Calu3 (cell line): ENCODE measurements at regions of chr16 and their contacts with region 1.

Region 1: DNA sequence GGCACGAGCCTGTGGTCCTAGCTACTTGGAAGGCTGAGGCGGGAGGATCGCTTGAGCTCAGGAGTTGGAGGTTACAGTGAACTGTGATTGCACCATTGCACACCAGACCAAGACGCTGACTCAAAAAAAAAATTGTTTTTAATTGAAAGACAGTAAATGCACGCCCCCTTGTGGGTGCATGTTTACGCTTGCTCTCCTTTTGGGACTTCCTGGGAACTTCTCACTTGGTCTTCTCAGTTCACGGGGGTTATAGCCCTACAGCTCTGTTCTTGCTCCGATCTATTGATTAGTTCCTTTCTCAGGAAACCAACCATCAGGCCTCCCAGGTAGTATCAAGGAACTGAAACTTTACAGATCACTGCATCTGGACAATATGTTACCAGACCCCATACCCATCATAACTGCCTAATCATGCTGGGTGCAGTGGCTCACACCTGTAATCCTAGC is 14.2 kb upstream of the RIPOR1 start:
- DNase-seq: peak; percentile 85
- H3K4me3 Mint-ChIP-seq: no peak overlapping the region
- H3K27ac Mint-ChIP-seq: no peak overlapping the region
- H3K4me1 Mint-ChIP-seq: no peaks in the 10 kb centered on the region
- H3K27me3 Mint-ChIP-seq: peaks cover 7% of the 10 kb centered on the region
- CTCF ChIP-seq: peak; percentile 82

Region 2: DNA sequence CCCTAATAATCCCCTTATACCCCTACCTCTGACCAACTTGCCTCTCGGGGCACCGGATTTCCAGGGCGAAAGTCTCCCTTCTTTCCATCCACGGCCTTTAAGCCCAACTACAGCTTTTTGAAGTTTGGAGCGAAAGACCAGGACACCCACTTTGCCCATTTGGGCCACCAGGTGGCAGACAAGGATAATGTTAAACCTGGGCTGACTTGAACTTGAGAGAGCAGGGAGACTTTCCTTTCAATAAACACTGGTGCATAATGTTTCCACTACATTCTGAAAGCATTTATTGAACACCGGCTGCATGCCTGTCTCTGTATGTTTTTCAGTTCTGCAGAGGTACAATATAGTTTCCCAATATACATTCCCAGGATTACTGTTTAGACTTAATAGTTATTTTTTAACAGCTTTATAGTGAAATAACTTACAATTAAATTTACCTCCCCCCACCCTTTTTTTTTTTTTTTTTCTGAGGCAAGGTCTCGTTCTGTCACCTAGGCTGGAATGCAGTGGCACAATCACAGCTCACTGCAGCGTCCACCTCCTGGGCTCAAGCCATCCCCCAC is 560.2 kb before region 1 on chr16:
- CTCF ChIA-PET with region 1: no interaction called
- intact Hi-C with region 1: loop called (anchors 2 kb)
- DNase-seq: peak; percentile 88
- H3K4me3 Mint-ChIP-seq: peak overlapping the region; percentile 38
- H3K27ac Mint-ChIP-seq: peak overlapping the region; percentile 42
- H3K4me1 Mint-ChIP-seq: peaks cover 9% of the 10 kb centered on the region
- H3K27me3 Mint-ChIP-seq: peaks cover 27% of the 10 kb centered on the region
- CTCF ChIP-seq: peak; percentile 74

Region 3: GRCh38 chr16:67480833-67481560 is 33.4 kb before region 1 on chr16 and contains the start of gene ATP6V0D1:
- CTCF ChIA-PET with region 1: interaction called, 17 read pairs
- intact Hi-C with region 1: no loop called
- DNase-seq: peak; percentile 100
- H3K4me3 Mint-ChIP-seq: peak within 1 kb of the TSS; percentile 100
- H3K27ac Mint-ChIP-seq: peak within 1 kb of the TSS; percentile 99
- H3K4me1 Mint-ChIP-seq: peaks cover 10% of the 10 kb centered on the region
- H3K27me3 Mint-ChIP-seq: no peaks in the 10 kb centered on the region
- CTCF ChIP-seq: peak; percentile 82
- total RNA-seq, gene ATP6V0D1: 85.3 and 91.0 TPM in 2 replicates

Region 4: DNA sequence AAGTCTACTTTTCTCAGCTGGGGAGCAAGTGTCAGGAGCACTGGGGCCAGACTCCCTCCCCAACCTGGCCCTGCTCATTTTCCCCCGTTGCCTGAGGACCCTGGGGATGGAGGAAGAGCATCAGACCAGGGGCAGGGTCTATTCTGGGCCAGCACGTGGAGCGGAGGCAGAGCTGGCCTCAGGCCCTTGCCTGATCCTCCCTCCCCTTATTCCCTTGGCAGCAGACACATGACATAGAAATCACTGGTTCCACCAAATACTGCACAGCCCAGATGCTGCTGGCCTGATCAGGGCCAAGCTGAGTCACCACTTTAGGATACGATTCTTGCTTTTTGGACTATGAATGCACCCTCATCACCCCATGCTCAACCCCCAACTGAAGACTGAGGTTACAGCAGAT is 15.3 kb before region 1 on chr16:
- CTCF ChIA-PET with region 1: interaction called, 7 read pairs
- intact Hi-C with region 1: loop called (anchors 1 kb)
- DNase-seq: no peak
- H3K4me3 Mint-ChIP-seq: no peak overlapping the region
- H3K27ac Mint-ChIP-seq: no peak overlapping the region
- H3K4me1 Mint-ChIP-seq: no peaks in the 10 kb centered on the region
- H3K27me3 Mint-ChIP-seq: no peaks in the 10 kb centered on the region
- CTCF ChIP-seq: no peak

Region 5: GRCh38 chr16:67530013-67530939 is 15.9 kb after region 1 on chr16:
- CTCF ChIA-PET with region 1: no interaction called
- intact Hi-C with region 1: no loop called
- DNase-seq: peak; percentile 73
- H3K4me3 Mint-ChIP-seq: peak overlapping the region; percentile 87
- H3K27ac Mint-ChIP-seq: peak overlapping the region; percentile 76
- H3K4me1 Mint-ChIP-seq: peaks cover 44% of the 10 kb centered on the region
- H3K27me3 Mint-ChIP-seq: peaks cover 9% of the 10 kb centered on the region
- CTCF ChIP-seq: no peak